WTC11 (cell line): ENCODE measurements at regions of chr1 and their contacts with region 1.

Region 1: GRCh38 chr1:212477014-212477679 is 44.4 kb downstream of the NENF start:
- DNase-seq: peak; percentile 88
- ATAC-seq: peak; percentile 96
- H3K4me3 Mint-ChIP-seq: no peak overlapping the region
- H3K27ac Mint-ChIP-seq: no peak overlapping the region
- H3K4me1 Mint-ChIP-seq: peaks cover 16% of the 10 kb centered on the region
- H3K27me3 Mint-ChIP-seq: no peaks in the 10 kb centered on the region
- CTCF ChIP-seq: peak; percentile 70

Region 2: GRCh38 chr1:212514056-212514614 is 37.0 kb after region 1 on chr1:
- CTCF ChIA-PET with region 1: interaction called, 20 read pairs
- POLR2A ChIA-PET with region 1: no interaction called
- DNase-seq: peak; percentile 33
- ATAC-seq: peak; percentile 17
- H3K4me3 Mint-ChIP-seq: no peak overlapping the region
- H3K27ac Mint-ChIP-seq: no peak overlapping the region
- H3K4me1 Mint-ChIP-seq: peaks cover 12% of the 10 kb centered on the region
- H3K27me3 Mint-ChIP-seq: peaks cover 33% of the 10 kb centered on the region
- CTCF ChIP-seq: no peak

Region 3: GRCh38 chr1:212586206-212587015 is 109.3 kb after region 1 on chr1:
- CTCF ChIA-PET with region 1: interaction called, 11 read pairs
- POLR2A ChIA-PET with region 1: interaction called, 4 read pairs
- DNase-seq: no peak
- ATAC-seq: peak; percentile 18; the same call in 1 of the 2 replicates
- H3K4me3 Mint-ChIP-seq: no peak overlapping the region
- H3K27ac Mint-ChIP-seq: no peak overlapping the region
- H3K4me1 Mint-ChIP-seq: peaks cover 27% of the 10 kb centered on the region
- H3K27me3 Mint-ChIP-seq: no peaks in the 10 kb centered on the region
- CTCF ChIP-seq: no peak

Region 4: DNA sequence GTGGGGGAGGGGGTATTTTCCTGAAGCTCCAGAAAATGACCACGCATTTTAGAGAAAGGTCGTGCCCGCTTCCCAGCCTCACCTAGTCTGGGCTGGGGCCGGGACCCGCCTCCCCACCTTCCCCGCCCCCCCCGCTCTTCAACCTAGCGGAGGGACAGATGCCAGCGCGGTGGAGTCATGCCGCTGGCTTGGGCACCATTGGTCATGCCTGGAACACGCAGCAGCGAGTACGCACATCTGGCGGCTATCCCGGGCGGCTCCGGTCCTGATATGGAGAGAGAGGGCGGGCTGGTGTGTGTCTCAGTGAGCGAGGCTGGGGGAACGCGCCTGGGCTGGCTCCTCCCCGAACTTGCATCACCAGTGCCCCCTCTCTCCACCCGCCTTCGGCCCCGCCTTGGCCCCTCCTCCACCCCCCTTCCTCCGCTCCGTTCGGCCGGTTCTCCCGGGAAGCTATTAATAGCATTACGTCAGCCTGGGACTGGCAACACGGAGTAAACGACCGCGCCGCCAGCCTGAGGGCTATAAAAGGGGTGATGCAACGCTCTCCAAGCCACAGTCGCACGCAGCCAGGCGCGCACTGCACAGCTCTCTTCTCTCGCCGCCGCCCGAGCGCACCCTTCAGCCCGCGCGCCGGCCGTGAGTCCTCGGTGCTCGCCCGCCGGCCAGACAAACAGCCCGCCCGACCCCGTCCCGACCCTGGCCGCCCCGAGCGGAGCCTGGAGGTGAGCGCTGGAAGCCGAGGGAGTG is 131.2 kb after region 1 on chr1 and contains the start of gene ATF3:
- CTCF ChIA-PET with region 1: interaction called, 21 read pairs
- POLR2A ChIA-PET with region 1: interaction called, 32 read pairs
- DNase-seq: peak; percentile 99
- ATAC-seq: peak; percentile 84
- H3K4me3 Mint-ChIP-seq: peak within 1 kb of the TSS; percentile 89
- H3K27ac Mint-ChIP-seq: peak within 1 kb of the TSS; percentile 49; the same call in 1 of the 2 replicates
- H3K4me1 Mint-ChIP-seq: peaks cover 62% of the 10 kb centered on the region
- H3K27me3 Mint-ChIP-seq: peaks cover 64% of the 10 kb centered on the region
- CTCF ChIP-seq: no peak
- total RNA-seq, gene ATF3: 12.5 to 19.4 TPM (median 14.6 TPM) in 3 replicates